Heart left ventricle (tissue), 16 donors: ENCODE measurements at regions of chr5 and their contacts with region 1.

Region 1: DNA sequence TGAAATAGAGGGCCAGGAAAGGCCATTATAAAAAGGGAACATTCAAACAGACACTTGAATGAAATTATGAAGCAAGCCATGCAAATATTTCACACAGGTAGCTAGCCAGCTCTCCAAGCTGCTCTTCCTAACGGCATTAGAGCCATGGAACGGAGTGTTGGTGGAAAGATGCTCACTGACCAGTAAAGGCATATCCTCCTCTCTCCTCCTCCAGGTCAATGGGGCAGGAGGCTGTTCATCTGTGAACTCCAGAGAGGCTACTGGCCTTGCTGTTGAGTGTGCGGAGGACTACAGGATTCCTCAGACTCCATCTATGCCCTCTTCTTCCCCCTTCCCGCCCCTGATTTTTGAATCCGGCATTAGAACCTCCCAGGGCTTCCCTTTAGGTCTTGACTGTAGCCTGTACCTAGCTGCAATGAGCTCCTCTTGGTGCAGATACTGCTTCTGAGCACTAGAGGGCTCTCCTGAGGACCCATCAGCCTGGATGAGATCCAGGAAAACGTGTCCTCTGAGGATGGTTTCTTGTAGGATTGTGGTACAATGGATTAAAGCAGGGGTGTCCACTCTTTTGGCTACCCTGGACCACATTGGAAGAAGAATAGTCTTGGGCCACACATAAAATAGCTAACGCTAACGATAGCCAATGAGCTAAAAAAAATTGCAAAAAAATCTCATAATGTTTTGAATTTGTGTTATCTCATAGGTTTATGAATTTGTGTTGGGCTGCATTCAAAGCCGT is 162.2 kb downstream of the SREK1 start:
- DNase-seq: peak in 4 of 5 donors; percentile 43 to 57 (median 48)
- ATAC-seq: peak; percentile 70 to 86 (median 78)
- H3K4me3 ChIP-seq: no peak overlapping the region
- H3K27ac ChIP-seq: peak overlapping the region in 4 of 12 donors; percentile 8 to 43 (median 22)
- H3K4me1 ChIP-seq: peaks cover 0 to 30% (median 15%) of the 10 kb centered on the region in 12 donors
- H3K27me3 ChIP-seq: no peaks in the 10 kb centered on the region
- CTCF ChIP-seq: peak; percentile 64 to 88 (median 80)
- POLR2A ChIP-seq: no peak

Region 2: GRCh38 chr5:66415208-66415607 is 108.9 kb after region 1 on chr5:
- intact Hi-C with region 1: loop called in 1 of 10 experiments (anchors 5 kb)
- DNase-seq: no peak
- ATAC-seq: no peak
- H3K4me3 ChIP-seq: no peak overlapping the region
- H3K27ac ChIP-seq: peak overlapping the region in 6 of 12 donors; percentile 1 to 23 (median 8)
- H3K4me1 ChIP-seq: peaks cover 0 to 53% (median 23%) of the 10 kb centered on the region in 12 donors
- H3K27me3 ChIP-seq: no peaks in the 10 kb centered on the region
- CTCF ChIP-seq: no peak
- POLR2A ChIP-seq: no peak

Region 3: DNA sequence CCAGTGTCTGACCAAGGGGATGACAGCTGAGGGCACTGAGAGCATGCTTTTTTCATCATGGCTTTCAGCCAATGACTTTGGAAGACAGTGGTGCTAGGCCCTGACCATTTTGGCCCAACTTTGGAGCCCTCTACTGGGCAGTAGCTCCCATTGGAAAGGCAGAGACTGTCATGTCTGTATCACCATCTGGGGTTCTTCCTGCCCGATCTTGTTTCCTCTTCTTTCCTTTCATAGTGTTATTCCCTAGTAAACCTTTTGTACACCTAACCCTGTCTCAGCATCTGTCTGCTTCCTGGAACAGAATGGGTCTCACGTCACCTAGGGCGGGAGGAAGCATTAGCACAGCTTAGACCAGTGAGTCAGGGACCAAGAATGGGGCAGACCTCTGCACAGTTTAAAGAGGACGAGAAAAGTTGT is 192.5 kb after region 1 on chr5:
- intact Hi-C with region 1: loop called in 7 of 10 experiments (anchors 5 kb)
- DNase-seq: peak in 4 of 5 donors; percentile 31 to 38 (median 36)
- ATAC-seq: peak; percentile 77 to 91 (median 87)
- H3K4me3 ChIP-seq: no peak overlapping the region
- H3K27ac ChIP-seq: no peak overlapping the region
- H3K4me1 ChIP-seq: peaks cover 0 to 6% (median 0%) of the 10 kb centered on the region in 12 donors
- H3K27me3 ChIP-seq: no peaks in the 10 kb centered on the region
- CTCF ChIP-seq: peak in 10 of 12 donors; percentile 21 to 57 (median 42)
- POLR2A ChIP-seq: no peak

Region 4: DNA sequence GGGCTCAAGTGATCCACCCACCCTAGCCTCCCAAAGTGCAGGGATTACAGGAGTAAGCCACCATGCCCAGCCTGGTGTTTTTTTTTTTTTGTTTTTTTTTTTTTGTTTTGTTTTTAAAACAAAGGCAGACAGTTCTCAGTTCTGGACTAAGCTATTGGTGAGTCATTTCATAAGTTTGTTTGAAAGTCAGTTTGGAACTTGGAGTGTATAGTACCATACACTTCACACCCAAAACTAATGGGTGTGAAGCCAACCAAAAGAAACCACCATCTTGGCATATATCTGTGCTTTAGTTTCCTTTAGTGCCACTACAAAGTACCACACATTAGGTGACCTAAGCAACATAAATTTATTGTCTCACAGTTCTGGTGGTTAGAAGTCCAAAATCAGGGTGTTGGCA is 303.3 kb after region 1 on chr5:
- intact Hi-C with region 1: loop called in 1 of 10 experiments (anchors 5 kb)
- DNase-seq: no peak
- ATAC-seq: no peak
- H3K4me3 ChIP-seq: no peak overlapping the region
- H3K27ac ChIP-seq: no peak overlapping the region
- H3K4me1 ChIP-seq: peaks cover 0 to 40% (median 9%) of the 10 kb centered on the region in 12 donors
- H3K27me3 ChIP-seq: no peaks in the 10 kb centered on the region
- CTCF ChIP-seq: no peak
- POLR2A ChIP-seq: no peak

Region 5: DNA sequence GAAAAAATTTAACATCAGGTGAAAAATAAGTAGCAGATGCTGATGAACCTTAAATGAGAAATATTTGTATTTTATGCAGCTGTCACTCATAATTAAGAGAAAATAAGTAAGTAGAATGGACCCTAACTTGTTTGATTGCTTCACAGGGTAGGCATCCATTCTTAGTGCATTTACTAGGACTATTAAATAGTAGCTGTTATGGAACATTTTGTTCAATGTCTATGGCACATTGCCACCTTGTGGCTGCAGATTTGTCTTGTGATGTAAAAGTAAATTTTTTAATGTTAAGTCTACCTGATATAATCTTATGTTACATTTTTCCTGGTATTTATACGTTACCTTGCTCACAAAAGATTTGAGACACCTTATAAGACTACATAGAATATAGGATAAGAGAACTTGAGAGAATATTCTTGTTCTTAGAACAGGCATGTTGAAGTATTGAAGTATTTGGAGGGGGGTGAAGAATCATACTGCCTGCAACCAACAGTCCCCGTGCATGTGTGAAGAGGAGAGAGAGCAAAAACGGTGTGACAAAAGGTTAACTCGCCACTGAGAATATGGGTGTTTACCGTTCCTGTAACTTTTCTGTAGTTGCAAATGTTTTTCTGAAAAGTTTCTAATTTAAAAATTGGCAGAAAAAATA is 451.0 kb after region 1 on chr5:
- intact Hi-C with region 1: loop called (anchors 1 to 5 kb)
- DNase-seq: peak in 4 of 5 donors; percentile 35 to 56 (median 41)
- ATAC-seq: peak in 3 of 4 donors; percentile 59 to 77 (median 72)
- H3K4me3 ChIP-seq: no peak overlapping the region
- H3K27ac ChIP-seq: no peak overlapping the region
- H3K4me1 ChIP-seq: peaks cover 0 to 24% (median 7%) of the 10 kb centered on the region in 12 donors
- H3K27me3 ChIP-seq: no peaks in the 10 kb centered on the region
- CTCF ChIP-seq: peak; percentile 32 to 71 (median 54)
- POLR2A ChIP-seq: no peak

Region 6: GRCh38 chr5:66849803-66850202 is 543.5 kb after region 1 on chr5:
- intact Hi-C with region 1: no loop called
- DNase-seq: no peak
- ATAC-seq: peak in 1 of 4 donors; percentile 37
- H3K4me3 ChIP-seq: no peak overlapping the region
- H3K27ac ChIP-seq: no peak overlapping the region
- H3K4me1 ChIP-seq: peaks cover 0 to 60% (median 25%) of the 10 kb centered on the region in 12 donors
- H3K27me3 ChIP-seq: no peaks in the 10 kb centered on the region
- CTCF ChIP-seq: no peak
- POLR2A ChIP-seq: no peak

Region 7: DNA sequence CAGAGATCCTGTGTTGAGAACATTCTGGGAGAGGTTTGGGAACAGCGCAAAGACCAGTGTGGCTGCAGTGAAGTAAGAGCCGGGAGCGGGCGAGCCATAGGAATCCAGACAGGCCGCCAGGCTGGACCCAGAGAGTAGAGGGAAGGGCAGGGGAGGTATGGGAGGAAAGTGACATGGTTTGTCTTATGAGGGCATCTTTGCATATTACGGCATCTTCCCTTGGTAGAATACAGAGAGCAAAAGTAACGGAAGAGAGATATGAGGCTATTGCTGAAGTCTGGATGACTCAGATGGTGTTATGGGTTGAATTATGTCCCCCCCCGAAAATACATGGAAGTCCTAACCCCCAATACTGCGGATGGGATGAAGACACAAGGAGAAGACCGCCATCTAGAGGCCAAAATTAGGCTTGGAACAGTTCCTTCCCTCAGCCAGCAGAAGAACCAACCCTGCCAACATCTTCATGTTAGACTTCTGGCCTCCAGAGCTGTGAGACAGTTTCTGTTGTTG is 558.1 kb after region 1 on chr5:
- intact Hi-C with region 1: loop called in 1 of 10 experiments (anchors 10 kb)
- DNase-seq: peak in 1 of 5 donors; percentile 25
- ATAC-seq: peak in 3 of 4 donors; percentile 25 to 66 (median 48)
- H3K4me3 ChIP-seq: no peak overlapping the region
- H3K27ac ChIP-seq: no peak overlapping the region
- H3K4me1 ChIP-seq: peaks cover 0 to 55% (median 11%) of the 10 kb centered on the region in 12 donors
- H3K27me3 ChIP-seq: no peaks in the 10 kb centered on the region
- CTCF ChIP-seq: peak; percentile 24 to 64 (median 45)
- POLR2A ChIP-seq: no peak

Region 8: GRCh38 chr5:67215583-67216471 is 909.6 kb after region 1 on chr5:
- intact Hi-C with region 1: loop called in 1 of 10 experiments (anchors 10 kb)
- DNase-seq: peak; percentile 81 to 94 (median 88)
- ATAC-seq: peak; percentile 81 to 95 (median 92)
- H3K4me3 ChIP-seq: peak overlapping the region in 9 of 12 donors; percentile 3 to 36 (median 32)
- H3K27ac ChIP-seq: peak overlapping the region in 11 of 12 donors; percentile 11 to 86 (median 61)
- H3K4me1 ChIP-seq: peaks cover 6 to 26% (median 19%) of the 10 kb centered on the region in 12 donors
- H3K27me3 ChIP-seq: no peaks in the 10 kb centered on the region
- CTCF ChIP-seq: no peak
- POLR2A ChIP-seq: no peak